Transverse colon (tissue), 4 donors: ENCODE measurements at regions of chr1 and their contacts with region 1.

Region 1: DNA sequence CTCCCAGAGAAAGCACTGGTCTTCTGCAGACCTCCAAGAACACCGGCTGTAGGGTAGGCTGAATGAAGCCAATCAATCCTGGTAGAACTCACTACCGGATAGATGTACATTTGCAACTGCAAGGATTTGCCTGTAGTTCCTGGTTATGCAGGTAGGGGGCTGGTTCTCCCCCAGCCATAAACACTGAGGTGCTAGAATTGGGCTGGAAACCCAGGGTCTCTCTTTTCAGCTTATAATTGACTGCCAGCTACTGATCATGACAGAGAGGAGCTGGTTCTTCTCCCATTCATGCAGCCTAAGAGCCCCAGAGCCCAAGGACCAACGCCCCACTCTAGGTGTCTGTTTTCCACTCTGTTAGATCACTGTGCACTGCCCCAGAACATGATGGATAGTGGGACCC is 21.5 kb upstream of the MTARC2 start:
- DNase-seq: no peak
- H3K4me3 ChIP-seq: no peak overlapping the region
- H3K27ac ChIP-seq: no peak overlapping the region
- H3K4me1 ChIP-seq: no peaks in the 10 kb centered on the region
- H3K27me3 ChIP-seq: no peaks in the 10 kb centered on the region
- CTCF ChIP-seq: peak in 1 of 5 experiments; percentile 19
- EP300 ChIP-seq: no peak
- POLR2A ChIP-seq: no peak

Region 2: DNA sequence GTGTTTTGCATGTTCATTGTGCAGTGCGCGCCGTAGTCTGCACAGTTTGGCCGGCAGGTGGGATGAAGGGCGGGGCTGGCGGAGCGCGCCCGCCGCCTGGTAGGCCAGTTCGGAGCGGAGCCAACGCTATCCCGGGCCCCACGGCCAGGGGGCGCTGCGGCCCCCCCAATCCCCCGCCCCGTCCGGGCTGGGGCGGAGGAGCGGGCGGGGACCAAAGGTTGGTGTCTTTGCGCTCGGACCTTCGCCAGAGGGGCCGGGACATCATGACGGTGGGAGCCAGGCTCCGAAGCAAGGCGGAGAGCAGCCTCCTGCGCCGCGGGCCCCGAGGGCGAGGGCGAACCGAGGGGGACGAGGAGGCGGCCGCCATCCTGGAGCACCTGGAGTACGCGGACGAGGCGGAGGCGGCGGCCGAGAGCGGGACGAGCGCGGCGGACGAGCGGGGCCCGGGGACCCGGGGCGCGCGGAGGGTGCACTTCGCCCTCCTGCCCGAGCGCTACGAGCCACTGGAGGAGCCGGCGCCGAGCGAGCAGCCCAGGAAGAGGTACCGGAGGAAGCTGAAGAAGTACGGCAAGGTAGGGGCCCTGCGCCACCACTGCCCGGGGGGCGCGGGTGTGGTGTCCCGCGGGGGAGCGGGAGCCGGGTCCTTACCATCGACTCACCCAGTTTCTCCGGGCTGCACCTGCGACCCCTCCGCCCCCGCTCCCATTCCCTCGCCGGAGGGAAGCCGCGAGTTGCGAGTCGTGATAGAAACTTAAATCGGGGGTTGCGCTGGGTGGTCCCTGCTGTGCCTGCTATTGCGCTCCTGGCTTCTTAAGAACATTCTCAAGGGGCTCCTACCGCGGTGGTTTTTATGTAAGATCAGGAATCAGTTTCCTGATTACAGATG is 36.3 kb before region 1 on chr1 and contains the start of gene C1orf115:
- in situ Hi-C with region 1: loop called in 1 of 4 experiments (anchors 10 kb)
- intact Hi-C with region 1: loop called (anchors 5 kb)
- DNase-seq: peak; percentile 88
- H3K4me3 ChIP-seq: peak within 1 kb of the TSS; percentile 45 to 85 (median 66)
- H3K27ac ChIP-seq: peak within 1 kb of the TSS; percentile 57 to 84 (median 80)
- H3K4me1 ChIP-seq: peaks cover 0 to 15% (median 9%) of the 10 kb centered on the region in 4 donors
- H3K27me3 ChIP-seq: no peaks in the 10 kb centered on the region
- CTCF ChIP-seq: peak; percentile 95 to 99 (median 98)
- EP300 ChIP-seq: no peak
- POLR2A ChIP-seq: peak; percentile 83
- total RNA-seq, gene C1orf115: 43.2 to 153 (median 103) TPM

Region 3: DNA sequence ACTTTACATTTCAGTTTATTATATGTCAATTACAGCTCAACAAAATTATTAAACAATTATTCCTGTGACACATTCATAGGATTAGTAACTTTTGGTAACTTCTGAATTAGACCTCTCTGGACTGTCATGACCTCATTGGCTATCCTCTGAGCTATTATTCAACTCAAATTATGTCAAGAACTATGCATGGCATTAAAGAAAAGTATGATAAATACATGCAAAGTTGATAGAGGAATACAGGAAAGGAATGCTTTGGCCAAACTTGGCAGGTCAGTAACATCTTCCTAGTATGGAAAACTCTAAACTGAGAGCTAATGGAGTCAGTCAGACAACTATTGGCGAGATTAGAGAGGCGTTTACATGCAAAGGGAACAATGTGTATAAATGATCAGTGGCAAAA is 856.8 kb after region 1 on chr1:
- in situ Hi-C with region 1: no loop called
- intact Hi-C with region 1: no loop called
- DNase-seq: no peak
- H3K4me3 ChIP-seq: no peak overlapping the region
- H3K27ac ChIP-seq: no peak overlapping the region
- H3K4me1 ChIP-seq: no peaks in the 10 kb centered on the region
- H3K27me3 ChIP-seq: no peaks in the 10 kb centered on the region
- CTCF ChIP-seq: no peak
- EP300 ChIP-seq: no peak
- POLR2A ChIP-seq: no peak